ENCODE measurements at regions of chr22 and their contacts with region 1.

Region 1: DNA sequence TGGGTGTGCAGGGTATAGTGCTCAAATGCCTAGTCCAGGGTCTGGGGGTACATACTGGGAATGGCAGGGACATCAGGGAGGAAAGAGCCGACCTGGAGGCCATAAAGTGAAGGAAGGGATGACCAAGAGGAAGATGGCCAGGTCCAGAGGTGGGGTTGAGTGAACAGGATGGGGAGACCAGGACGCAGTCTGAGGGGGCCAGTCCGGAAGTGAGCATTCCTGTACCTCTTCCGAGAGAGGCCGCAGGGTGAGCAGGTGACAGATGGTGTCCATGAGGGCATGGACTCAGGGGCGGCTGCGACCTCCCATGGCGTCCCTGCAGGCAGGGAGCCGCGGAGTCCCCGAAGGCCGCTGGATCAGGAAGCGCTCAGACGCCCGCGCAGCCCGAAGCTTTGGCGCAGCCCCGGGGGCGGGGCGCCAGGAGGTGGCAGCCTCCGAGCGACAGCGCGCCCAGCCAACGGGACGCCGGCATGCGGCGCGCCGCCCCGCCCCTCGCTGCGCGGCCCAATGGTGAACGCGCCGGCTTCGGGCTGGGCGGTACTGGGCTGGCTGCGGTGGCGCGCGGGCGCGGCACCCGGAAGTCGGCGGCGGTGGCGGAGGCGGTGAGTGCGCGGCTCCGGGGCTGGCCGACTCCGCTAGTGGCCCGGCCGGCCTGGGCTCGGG is at the start of gene TANGO2:
- DNase-seq: peak; percentile 100
- ATAC-seq: peak; percentile 87
- H3K4me3 ChIP-seq: peak within 1 kb of the TSS; percentile 70
- H3K27ac ChIP-seq: peak within 1 kb of the TSS; percentile 85
- H3K4me1 ChIP-seq: peaks cover 51 to 78% of the 10 kb centered on the region in 2 experiments
- H3K27me3 ChIP-seq: peaks cover 0 to 8% of the 10 kb centered on the region in 2 experiments; a peak in 2 of 5 replicates
- CTCF ChIP-seq: peak in 2 of 3 experiments; percentile 24 to 26; a peak in 3 of 6 replicates
- EP300 ChIP-seq: no peak; the same call in 1 of the 2 replicates
- POLR2A ChIP-seq: no peak
- RAD21 ChIP-seq: 0 out of 4 replicates have a peak, but pooled peaks of 1 of the 2 experiments have one; percentile 21
- polyA plus RNA-seq, gene TANGO2: 15.5 to 17.5 TPM

Region 2: GRCh38 chr22:19986410-19987341 is 34.0 kb before region 1 on chr22:
- CTCF ChIA-PET with region 1: no interaction called
- POLR2A ChIA-PET with region 1: interaction called, 7 read pairs
- in situ Hi-C with region 1: no loop called
- intact Hi-C with region 1: loop called (anchors 5 kb)
- DNase-seq: peak; percentile 97 to 100 (median 100)
- ATAC-seq: peak; percentile 94
- H3K4me3 ChIP-seq: peak overlapping the region; percentile 48
- H3K27ac ChIP-seq: peak overlapping the region; percentile 43; the same call in 1 of the 3 replicates
- H3K4me1 ChIP-seq: peaks cover 39 to 91% of the 10 kb centered on the region in 2 experiments
- H3K27me3 ChIP-seq: no peaks in the 10 kb centered on the region
- CTCF ChIP-seq: peak in 2 of 3 experiments; percentile 14 to 20; a peak in 1 of 6 replicates
- EP300 ChIP-seq: no peak
- POLR2A ChIP-seq: peak; percentile 56
- RAD21 ChIP-seq: no peak; a peak in 1 of 4 replicates

Region 3: DNA sequence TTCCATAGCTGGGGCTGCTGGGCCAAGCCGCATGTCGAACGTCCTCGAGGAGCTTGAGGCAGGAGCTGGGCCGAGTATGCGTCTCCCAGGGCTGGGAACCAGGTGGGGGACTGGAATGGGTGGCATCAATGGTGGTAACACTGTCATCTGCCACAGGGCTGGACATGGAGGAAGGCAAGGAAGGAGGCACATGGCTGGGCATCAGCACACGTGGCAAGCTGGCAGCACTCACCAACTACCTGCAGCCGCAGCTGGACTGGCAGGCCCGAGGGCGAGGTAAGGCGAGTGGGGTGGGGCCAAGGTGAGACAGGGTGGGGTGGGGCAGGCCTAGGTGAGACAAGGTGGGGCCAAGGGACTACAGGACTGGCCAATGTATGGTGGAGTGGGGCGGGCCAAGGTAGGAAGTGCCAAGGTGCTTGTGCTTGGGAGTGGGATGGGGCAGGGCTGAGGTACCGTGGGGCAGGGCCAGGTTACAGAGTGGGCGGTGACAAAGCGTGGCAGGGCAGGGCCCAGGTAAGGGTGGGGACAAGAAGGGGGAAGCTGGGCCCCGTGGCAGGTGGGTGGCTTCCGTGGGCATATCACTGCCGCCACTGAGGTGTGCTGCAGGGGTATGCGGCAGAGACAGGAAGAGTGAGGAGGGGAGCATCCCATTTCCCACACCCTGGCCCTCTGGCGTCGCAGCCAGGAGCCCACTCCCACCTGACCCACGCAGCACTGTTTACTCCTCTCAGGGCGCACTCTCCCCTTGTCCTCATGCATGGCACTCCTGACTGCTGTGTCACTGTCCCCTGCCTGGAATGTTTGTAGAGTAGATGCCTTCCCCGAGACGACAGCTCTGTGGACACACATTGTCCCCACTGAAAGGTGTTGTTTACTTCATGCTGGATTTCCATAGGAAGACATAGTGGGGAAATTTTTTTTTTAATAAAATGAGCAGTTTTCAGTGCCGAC is 31.9 kb after region 1 on chr22:
- CTCF ChIA-PET with region 1: no interaction called
- POLR2A ChIA-PET with region 1: interaction called, 10 read pairs
- in situ Hi-C with region 1: no loop called
- intact Hi-C with region 1: no loop called
- DNase-seq: no peak
- ATAC-seq: no peak
- H3K4me3 ChIP-seq: no peak overlapping the region
- H3K27ac ChIP-seq: no peak overlapping the region
- H3K4me1 ChIP-seq: peaks cover 2 to 47% of the 10 kb centered on the region in 2 experiments
- H3K27me3 ChIP-seq: no peaks in the 10 kb centered on the region
- CTCF ChIP-seq: no peak
- EP300 ChIP-seq: no peak
- POLR2A ChIP-seq: peak; percentile 3; the same call in 1 of the 2 replicates
- RAD21 ChIP-seq: no peak

Region 4: GRCh38 chr22:20079745-20080444 is 59.2 kb after region 1 on chr22 and contains the start of gene DGCR8:
- CTCF ChIA-PET with region 1: no interaction called
- POLR2A ChIA-PET with region 1: interaction called, 7 read pairs
- in situ Hi-C with region 1: no loop called
- intact Hi-C with region 1: loop called (anchors 1 kb)
- DNase-seq: peak; percentile 100
- ATAC-seq: peak; percentile 87
- H3K4me3 ChIP-seq: peak within 1 kb of the TSS; percentile 67
- H3K27ac ChIP-seq: peak within 1 kb of the TSS; percentile 78
- H3K4me1 ChIP-seq: peaks cover 46 to 67% of the 10 kb centered on the region in 2 experiments
- H3K27me3 ChIP-seq: no peaks in the 10 kb centered on the region
- CTCF ChIP-seq: peak in 2 of 3 experiments; percentile 8 to 9; a peak in 2 of 6 replicates
- EP300 ChIP-seq: peak; percentile 62
- POLR2A ChIP-seq: no peak
- RAD21 ChIP-seq: peak; percentile 30 to 34; a peak in 2 of 4 replicates
- polyA plus RNA-seq, gene DGCR8: 5.9 to 7.7 TPM

Region 5: DNA sequence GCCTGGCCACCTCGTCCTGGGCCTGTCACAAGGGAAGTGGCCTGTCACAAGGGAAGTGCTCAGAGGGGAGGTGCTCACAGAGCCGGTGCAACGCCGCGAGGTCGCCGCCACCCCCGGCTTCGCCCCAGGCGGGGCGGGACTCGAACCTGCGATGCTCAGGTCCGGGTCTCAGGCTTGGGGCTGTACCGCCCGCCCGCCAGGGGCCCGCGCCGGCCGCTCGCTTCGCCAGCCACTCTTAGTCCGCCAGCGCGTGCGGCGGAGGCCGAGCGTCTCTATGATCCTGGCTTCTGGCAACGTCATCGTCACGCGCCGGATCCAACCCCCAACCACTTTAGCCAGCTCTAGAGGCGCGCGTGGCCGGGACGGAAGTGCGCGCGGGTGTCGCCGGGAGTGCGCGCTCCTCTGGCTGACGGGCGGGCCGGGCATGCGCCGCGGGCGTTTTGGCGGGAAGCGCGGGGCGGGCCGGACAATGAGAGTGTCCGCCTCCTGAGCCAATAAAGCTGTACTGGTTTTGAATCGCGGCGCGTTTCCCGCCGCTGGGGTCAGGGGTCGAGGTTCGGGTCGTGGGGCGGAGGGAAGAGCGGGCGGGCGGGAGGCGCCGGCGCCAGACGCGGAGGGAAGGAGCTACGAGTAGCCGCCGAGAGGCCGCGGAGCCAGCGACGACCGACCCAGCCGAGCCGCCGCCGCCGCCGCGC is 96.4 kb after region 1 on chr22 and contains the start of gene TRMT2A:
- CTCF ChIA-PET with region 1: no interaction called
- POLR2A ChIA-PET with region 1: interaction called, 14 read pairs
- in situ Hi-C with region 1: no loop called
- intact Hi-C with region 1: loop called (anchors 1 kb)
- DNase-seq: peak; percentile 100
- ATAC-seq: peak; percentile 88
- H3K4me3 ChIP-seq: peak within 1 kb of the TSS; percentile 63
- H3K27ac ChIP-seq: peak within 1 kb of the TSS; percentile 94
- H3K4me1 ChIP-seq: peaks cover 25 to 90% of the 10 kb centered on the region in 2 experiments
- H3K27me3 ChIP-seq: no peaks in the 10 kb centered on the region
- CTCF ChIP-seq: peak; percentile 56 to 62 (median 57); a peak in 4 of 6 replicates
- EP300 ChIP-seq: peak; percentile 89
- POLR2A ChIP-seq: peak; percentile 90
- RAD21 ChIP-seq: peak in 1 of 2 experiments; percentile 49; a peak in 2 of 4 replicates
- polyA plus RNA-seq, gene TRMT2A: 1.6 to 6.6 TPM

Measured in K562 (cell line).